Naive thymus-derived CD8-positive, alpha-beta T cell (primary cell): ENCODE measurements at regions of chr12 and their contacts with region 1.

Region 1: GRCh38 chr12:108618079-108618952 is 15.4 kb downstream of the SELPLG start:
- DNase-seq: peak; percentile 59 to 86 (median 78)
- ATAC-seq: peak; percentile 52 to 65
- H3K4me3 Mint-ChIP-seq: peak overlapping the region in 7 of 10 donors; percentile 9 to 68 (median 36)
- H3K27ac Mint-ChIP-seq: peak overlapping the region; percentile 77 to 98 (median 93)
- H3K4me1 Mint-ChIP-seq: peaks cover 45 to 77% (median 72%) of the 10 kb centered on the region in 4 donors
- H3K27me3 Mint-ChIP-seq: no peaks in the 10 kb centered on the region

Region 2: GRCh38 chr12:108228746-108229145 is 389.6 kb before region 1 on chr12:
- POLR2A ChIA-PET with region 1: no interaction called
- DNase-seq: no peak
- ATAC-seq: no peak
- H3K4me3 Mint-ChIP-seq: no peak overlapping the region
- H3K27ac Mint-ChIP-seq: peak overlapping the region in 1 of 10 donors; percentile 30
- H3K4me1 Mint-ChIP-seq: no peaks in the 10 kb centered on the region
- H3K27me3 Mint-ChIP-seq: peaks cover 7 to 34% (median 14%) of the 10 kb centered on the region in 5 donors

Region 3: GRCh38 chr12:108482717-108483212 is 135.6 kb before region 1 on chr12:
- POLR2A ChIA-PET with region 1: no interaction called
- DNase-seq: no peak
- ATAC-seq: no peak
- H3K4me3 Mint-ChIP-seq: no peak overlapping the region
- H3K27ac Mint-ChIP-seq: no peak overlapping the region
- H3K4me1 Mint-ChIP-seq: no peaks in the 10 kb centered on the region
- H3K27me3 Mint-ChIP-seq: peaks cover 28 to 79% (median 38%) of the 10 kb centered on the region in 5 donors

Region 4: GRCh38 chr12:108562348-108563135 is 55.8 kb before region 1 on chr12 and contains the start of gene ISCU:
- POLR2A ChIA-PET with region 1: interaction called, 132 read pairs
- DNase-seq: peak; percentile 97 to 100 (median 99)
- ATAC-seq: peak; percentile 67 to 72
- H3K4me3 Mint-ChIP-seq: peak within 1 kb of the TSS; percentile 97 to 100 (median 100)
- H3K27ac Mint-ChIP-seq: peak within 1 kb of the TSS; percentile 98 to 100 (median 100)
- H3K4me1 Mint-ChIP-seq: peaks cover 18 to 83% (median 55%) of the 10 kb centered on the region in 4 donors
- H3K27me3 Mint-ChIP-seq: no peaks in the 10 kb centered on the region
- polyA plus RNA-seq, gene ISCU: 287 to 373 (median 324) TPM

Region 5: GRCh38 chr12:108570743-108571608 is 47.3 kb before region 1 on chr12:
- POLR2A ChIA-PET with region 1: interaction called, 132 read pairs
- DNase-seq: peak in 2 of 10 donors; percentile 36 to 40
- ATAC-seq: no peak
- H3K4me3 Mint-ChIP-seq: peak overlapping the region in 7 of 10 donors; percentile 14 to 60 (median 45)
- H3K27ac Mint-ChIP-seq: peak overlapping the region; percentile 89 to 99 (median 96)
- H3K4me1 Mint-ChIP-seq: peaks cover 38 to 94% (median 81%) of the 10 kb centered on the region in 4 donors
- H3K27me3 Mint-ChIP-seq: no peaks in the 10 kb centered on the region

Region 6: DNA sequence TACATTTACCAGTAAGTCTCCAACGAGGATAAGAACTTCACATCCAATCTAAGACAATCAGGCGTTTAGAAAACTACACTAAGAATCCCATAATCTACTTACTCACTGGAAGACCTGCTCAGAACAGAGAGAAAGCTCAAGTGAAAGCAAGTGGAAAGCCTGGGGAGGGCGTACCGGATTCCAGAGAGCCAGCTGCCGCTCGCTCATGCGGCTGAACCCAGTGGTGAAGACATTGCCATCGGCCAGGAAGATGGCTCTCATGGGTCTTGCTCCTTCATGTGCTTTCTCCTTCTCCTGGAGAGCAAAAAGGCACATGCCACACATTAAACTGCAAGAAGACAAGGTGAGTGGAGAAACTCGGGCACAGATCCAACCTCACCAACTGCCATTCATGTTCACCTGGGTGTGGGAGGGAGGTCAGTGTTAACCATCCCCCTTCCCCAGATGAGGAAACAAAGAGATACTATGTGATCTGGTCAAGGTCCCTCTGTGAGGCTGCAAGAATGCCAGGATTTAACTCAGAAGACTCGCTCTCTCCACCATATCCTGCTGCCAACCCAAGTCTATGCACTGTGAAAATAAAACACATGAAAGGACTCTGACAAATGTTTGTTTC is 38.9 kb after region 1 on chr12:
- POLR2A ChIA-PET with region 1: no interaction called
- DNase-seq: no peak
- ATAC-seq: no peak
- H3K4me3 Mint-ChIP-seq: no peak overlapping the region
- H3K27ac Mint-ChIP-seq: no peak overlapping the region
- H3K4me1 Mint-ChIP-seq: peaks cover 0 to 12% (median 1%) of the 10 kb centered on the region in 4 donors
- H3K27me3 Mint-ChIP-seq: no peaks in the 10 kb centered on the region

Region 7: GRCh38 chr12:108744021-108744897 is 125.9 kb after region 1 on chr12:
- POLR2A ChIA-PET with region 1: no interaction called
- DNase-seq: no peak
- ATAC-seq: no peak
- H3K4me3 Mint-ChIP-seq: no peak overlapping the region
- H3K27ac Mint-ChIP-seq: no peak overlapping the region
- H3K4me1 Mint-ChIP-seq: no peaks in the 10 kb centered on the region
- H3K27me3 Mint-ChIP-seq: peaks cover 0 to 4% (median 3%) of the 10 kb centered on the region in 5 donors